GM13977 (cell line): ENCODE measurements at regions of chr21 and their contacts with region 1.

Region 1: DNA sequence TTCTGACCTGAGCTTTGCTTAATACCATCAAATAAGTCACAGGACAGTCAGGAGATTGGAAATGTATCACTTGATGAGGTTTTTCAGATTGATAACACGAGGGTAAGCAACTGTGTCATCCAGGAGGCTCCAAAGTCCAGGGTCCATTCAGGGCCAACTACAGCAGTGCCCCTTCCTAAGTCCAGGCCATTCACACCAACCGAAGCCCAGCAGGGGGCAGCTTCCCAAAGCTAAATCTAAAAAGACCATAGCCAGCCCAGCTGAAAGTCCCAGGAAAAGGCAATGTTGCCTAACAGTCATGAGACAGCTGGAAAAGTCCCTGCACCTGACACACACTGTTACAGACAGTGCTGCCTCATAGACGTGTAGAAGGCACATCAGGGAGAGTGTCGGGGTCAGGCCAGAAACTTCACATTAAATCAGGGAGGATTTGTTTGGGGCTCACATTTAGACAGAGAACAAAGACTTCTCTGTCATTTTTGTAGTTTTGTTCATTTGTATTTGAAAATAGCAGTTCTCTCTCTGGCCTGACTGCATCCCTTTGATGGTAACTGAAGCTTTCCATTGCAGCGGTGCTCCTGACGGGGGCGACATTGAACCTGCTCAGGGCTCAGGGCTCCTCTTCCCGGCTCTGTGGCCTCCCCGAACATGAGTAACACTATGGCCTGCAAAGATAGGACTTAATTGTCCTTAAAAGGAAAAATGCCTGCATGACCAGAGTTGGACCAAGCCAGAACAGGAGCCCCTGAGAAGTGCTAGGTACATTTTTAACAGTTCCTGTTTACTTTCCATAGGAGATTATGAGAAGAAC is 200.4 kb downstream of the NRIP1 start:
- DNase-seq: no peak
- CTCF ChIP-seq: peak; percentile 87

Region 2: DNA sequence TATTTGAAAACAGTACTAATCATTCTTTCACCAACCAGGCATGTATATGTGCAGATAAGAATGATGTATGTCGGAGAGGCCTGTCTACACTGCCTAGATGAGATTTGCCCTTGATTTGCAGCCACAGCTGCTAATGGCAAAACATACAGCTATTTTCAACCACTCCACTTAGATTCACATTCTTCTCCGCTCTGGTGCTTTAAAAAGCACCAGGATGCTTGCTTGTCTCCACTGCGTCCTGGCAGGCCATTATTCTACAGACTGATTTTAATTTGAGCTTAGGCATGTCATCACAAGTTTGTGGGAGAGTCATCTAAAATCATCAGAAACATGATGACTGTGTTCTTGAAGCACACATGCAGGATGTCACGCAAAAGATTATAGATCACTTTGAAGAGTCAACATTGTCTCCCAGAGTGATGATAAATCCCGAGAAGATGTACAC is 319.4 kb after region 1 on chr21:
- in situ Hi-C with region 1: no loop called
- DNase-seq: no peak
- CTCF ChIP-seq: no peak

Region 3: DNA sequence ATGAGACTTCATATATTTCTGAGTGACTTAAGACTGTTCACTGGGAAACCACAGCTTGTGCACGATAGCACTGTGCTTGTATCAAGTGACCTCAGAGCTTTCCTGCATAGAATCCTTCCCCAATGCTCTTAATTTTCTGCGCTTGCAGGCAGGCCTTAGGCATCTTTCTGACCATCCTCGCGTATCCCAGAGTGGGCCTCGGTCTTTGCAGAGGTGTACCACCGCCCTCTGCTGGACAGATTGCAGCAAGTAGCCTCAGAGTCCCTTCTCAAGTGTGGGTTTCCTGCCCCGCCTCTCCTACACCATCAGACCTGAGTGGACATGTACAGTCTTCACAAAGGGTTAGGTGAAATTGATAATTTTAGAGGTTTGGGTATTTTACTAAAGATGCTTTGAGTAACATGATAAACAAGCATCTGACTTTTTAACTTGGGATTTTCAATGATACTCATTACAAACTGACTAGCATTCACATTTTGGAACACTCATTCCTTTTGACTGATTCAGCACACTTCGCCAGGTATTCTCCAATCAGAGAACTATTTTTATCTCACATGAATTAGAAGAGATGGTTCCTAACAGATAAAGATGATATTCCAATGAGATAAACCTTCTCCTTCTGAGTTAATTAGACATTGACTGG is 618.8 kb after region 1 on chr21:
- in situ Hi-C with region 1: loop called (anchors 25 kb)
- DNase-seq: peak; percentile 48
- CTCF ChIP-seq: peak; percentile 90